ENCODE measurements at regions of chr17 and their contacts with region 1.

Region 1: DNA sequence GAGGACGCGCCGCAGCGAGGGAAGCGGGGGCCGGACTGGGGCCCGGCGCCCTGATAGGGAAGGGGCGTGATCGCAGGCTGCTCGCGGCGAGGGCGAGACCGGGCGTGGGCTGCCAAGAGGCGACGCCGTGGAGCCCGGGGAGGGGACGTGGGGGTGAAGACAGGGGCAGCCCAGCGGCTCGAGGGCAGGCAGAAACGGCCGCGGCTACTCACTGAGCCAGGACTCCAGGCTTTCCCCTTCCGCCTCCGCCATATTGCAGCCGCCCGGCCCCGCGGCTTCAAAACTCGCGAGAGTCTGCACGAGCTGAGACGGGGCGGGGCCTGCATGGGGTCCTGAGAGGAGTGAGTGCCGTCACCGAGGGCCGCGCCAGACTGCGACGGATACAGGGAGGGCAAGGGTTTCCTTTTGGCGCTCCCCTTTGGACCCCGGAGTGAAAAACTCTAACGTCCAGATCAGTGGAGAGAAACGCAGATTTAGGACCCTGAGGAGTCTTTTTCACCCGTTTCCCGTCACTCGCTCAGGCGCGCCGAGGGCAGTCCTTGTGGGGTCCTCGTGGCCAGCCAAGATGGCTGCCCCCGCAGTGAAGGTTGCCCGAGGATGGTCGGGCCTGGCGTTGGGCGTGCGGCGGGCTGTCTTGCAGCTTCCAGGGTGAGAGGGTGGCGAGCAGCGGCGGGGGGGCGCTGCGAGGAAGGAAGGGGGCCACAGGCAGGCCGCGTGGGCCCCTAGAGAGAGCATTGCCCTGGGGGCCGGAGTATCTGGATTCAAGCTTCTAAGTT is at the starts of genes GGA3 and MRPS7:
- DNase-seq: peak; percentile 95
- H3K4me3 ChIP-seq: peak within 1 kb of the TSS; percentile 64 to 92 (median 76)
- H3K27ac ChIP-seq: peak within 1 kb of the TSS; percentile 97
- H3K4me1 ChIP-seq: peaks cover 27% of the 10 kb centered on the region
- H3K27me3 ChIP-seq: no peaks in the 10 kb centered on the region
- CTCF ChIP-seq: no peak
- POLR2A ChIP-seq: peak; percentile 76
- total RNA-seq, gene GGA3: 39.2 and 62.9 TPM in 2 replicates
- total RNA-seq, gene MRPS7: 65.7 and 79.8 TPM in 2 replicates

Region 2: GRCh38 chr17:75250009-75250471 is 11.5 kb before region 1 on chr17:
- CTCF ChIA-PET with region 1: interaction called, 15 read pairs
- POLR2A ChIA-PET with region 1: interaction called, 5 read pairs
- dilution Hi-C with region 1: no loop called
- intact Hi-C with region 1: no loop called
- DNase-seq: peak; percentile 85
- H3K4me3 ChIP-seq: peak overlapping the region in 2 of 3 experiments; percentile 12 to 33
- H3K27ac ChIP-seq: peak overlapping the region; percentile 31
- H3K4me1 ChIP-seq: peaks cover 11% of the 10 kb centered on the region
- H3K27me3 ChIP-seq: no peaks in the 10 kb centered on the region
- CTCF ChIP-seq: no peak
- POLR2A ChIP-seq: no peak

Region 3: DNA sequence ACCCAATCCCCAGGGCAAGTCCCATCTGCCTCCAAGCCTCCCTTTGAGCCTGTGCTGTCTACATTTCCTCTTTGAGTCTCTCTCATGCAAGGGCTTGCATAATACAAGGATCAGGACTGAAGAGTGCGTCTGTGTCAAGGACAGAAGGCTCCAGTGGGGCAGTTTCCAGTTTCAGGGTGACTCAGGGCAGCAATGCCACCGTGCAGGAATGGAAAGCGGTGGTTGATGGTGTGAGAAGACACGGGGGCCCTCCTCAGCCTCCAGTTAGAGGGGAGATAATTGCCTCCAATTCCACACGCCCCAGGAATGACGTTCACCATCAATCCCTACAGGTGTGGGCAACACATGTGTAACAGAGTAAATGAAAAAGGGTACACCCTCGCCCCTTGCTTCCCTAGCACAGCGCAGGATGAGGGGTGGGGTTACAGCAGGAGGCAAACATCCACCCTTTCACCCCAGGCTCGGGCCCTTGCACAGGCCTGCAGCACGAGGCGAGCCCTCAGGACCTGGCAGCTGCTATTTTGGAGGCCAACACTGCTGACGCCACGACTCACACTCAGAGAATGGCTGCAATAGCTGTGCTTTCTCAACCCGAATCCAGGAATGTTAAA is 52.5 kb after region 1 on chr17:
- CTCF ChIA-PET with region 1: no interaction called
- POLR2A ChIA-PET with region 1: no interaction called
- dilution Hi-C with region 1: no loop called
- intact Hi-C with region 1: no loop called
- DNase-seq: no peak
- H3K4me3 ChIP-seq: no peak overlapping the region
- H3K27ac ChIP-seq: no peak overlapping the region
- H3K4me1 ChIP-seq: no peaks in the 10 kb centered on the region
- H3K27me3 ChIP-seq: no peaks in the 10 kb centered on the region
- CTCF ChIP-seq: no peak
- POLR2A ChIP-seq: no peak

Region 4: DNA sequence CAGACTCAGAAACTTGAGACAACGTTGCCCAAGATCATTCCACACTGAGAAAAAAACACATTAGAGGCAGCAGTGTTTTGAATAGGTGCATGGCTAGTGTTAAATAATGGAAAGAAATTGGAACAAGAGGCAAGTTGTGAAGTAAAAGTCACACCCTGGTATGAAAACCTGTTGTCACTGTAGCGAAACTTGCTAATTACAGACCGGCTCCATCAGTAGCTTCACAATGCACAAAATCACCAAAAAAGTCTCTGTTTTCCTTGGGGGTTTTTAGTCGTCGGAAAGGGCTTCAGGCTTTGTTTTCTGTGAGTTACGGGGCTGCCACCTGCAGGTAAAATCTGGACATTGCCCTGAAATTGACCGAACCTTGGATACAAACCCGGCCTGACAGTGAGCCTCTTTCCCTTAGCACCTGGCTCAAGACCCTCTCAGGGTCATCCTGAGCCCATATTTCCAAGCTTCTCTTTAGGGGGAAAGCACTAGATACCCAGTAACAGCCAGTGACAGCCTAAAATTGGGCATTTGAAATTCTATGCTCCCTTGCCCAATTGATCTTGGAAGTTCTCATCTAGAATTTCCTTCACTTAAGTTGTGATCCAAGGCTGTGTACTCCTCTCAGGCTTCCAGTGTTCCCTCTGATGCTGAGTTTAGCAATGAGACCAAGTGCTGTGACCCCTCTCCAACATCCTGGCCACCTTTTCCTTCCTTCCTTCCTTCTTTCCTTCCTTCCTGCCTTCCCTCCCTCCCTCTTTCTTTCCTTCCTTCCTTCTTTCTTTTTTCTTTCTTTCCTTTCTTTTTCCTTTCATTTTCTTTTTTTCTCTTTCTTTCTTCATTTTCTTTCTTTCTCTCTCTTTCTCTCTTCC is 151.2 kb after region 1 on chr17:
- CTCF ChIA-PET with region 1: interaction called, 17 read pairs
- POLR2A ChIA-PET with region 1: no interaction called
- dilution Hi-C with region 1: no loop called
- intact Hi-C with region 1: no loop called
- DNase-seq: peak; percentile 74
- H3K4me3 ChIP-seq: peak overlapping the region in 1 of 3 experiments; percentile 27
- H3K27ac ChIP-seq: no peak overlapping the region
- H3K4me1 ChIP-seq: peaks cover 5% of the 10 kb centered on the region
- H3K27me3 ChIP-seq: peaks cover 2 to 3% of the 10 kb centered on the region in 2 experiments
- CTCF ChIP-seq: peak; percentile 72 to 77
- POLR2A ChIP-seq: no peak

Measured in endothelial cell of umbilical vein (primary cell).